ENCODE measurements at regions of chr1 and their contacts with region 1.

Region 1: GRCh38 chr1:234656856-234657654 is 47.1 kb upstream of the IRF2BP2 start:
- DNase-seq: no peak
- H3K4me3 ChIP-seq: no peak overlapping the region
- H3K27ac ChIP-seq: no peak overlapping the region
- H3K4me1 ChIP-seq: peaks cover 0 to 4% of the 10 kb centered on the region in 2 donors
- H3K27me3 ChIP-seq: no peaks in the 10 kb centered on the region
- CTCF ChIP-seq: no peak

Region 2: DNA sequence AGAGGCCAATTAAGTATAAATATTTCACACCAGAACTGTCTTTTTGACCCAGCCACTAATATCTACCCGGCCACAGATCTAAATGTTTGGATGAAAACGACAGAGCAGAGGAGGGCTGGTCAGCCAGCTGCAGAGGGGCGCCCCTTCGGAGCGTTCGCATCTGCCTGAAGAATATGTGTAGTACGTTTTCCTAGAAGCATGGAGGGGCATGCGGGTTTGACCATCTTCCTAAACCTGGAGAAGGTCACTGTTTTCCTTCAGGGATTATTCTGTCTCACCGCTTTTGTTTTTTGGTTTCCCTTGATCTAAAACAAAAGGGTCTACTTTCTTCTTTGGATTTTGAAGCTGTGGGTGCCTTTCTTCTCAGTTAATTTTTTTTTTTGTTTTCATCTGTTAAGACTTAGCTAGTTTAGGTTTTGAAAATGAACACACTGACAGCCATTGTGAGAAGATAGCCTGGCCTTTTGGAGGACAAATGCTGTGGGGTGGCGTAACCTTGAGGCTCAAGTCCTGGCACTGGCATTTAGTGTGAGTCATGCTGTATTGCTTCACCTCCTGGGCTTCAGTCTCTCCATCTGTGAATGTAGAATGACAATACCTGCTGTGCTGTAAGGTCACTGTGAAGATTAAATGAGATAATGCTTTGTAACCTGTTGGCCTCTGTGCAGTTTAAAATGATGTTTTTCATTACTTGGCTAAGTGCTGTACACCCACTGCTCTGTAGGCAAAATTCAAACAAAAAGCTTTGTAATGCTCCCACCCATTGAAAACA is 27.0 kb after region 1 on chr1:
- intact Hi-C with region 1: no loop called
- DNase-seq: peak in 1 of 2 donors; percentile 88
- H3K4me3 ChIP-seq: no peak overlapping the region
- H3K27ac ChIP-seq: no peak overlapping the region
- H3K4me1 ChIP-seq: peaks cover 8 to 11% of the 10 kb centered on the region in 2 donors
- H3K27me3 ChIP-seq: no peaks in the 10 kb centered on the region
- CTCF ChIP-seq: no peak

Region 3: GRCh38 chr1:234699795-234700665 is 43.0 kb after region 1 on chr1:
- intact Hi-C with region 1: loop called (anchors 5 kb)
- DNase-seq: peak in 1 of 2 donors; percentile 77
- H3K4me3 ChIP-seq: no peak overlapping the region
- H3K27ac ChIP-seq: peak overlapping the region; percentile 54 to 62
- H3K4me1 ChIP-seq: peaks cover 0 to 5% of the 10 kb centered on the region in 2 donors
- H3K27me3 ChIP-seq: no peaks in the 10 kb centered on the region
- CTCF ChIP-seq: no peak